Left colon (tissue), 2 donors: ENCODE measurements at regions of chr17 and their contacts with region 1.

Region 1: GRCh38 chr17:31216053-31216751 is 80.8 kb downstream of the OMG start:
- DNase-seq: no peak
- ATAC-seq: no peak

Region 2: GRCh38 chr17:31013844-31014243 is 202.4 kb before region 1 on chr17:
- intact Hi-C with region 1: loop called in 1 of 2 experiments (anchors 5 kb)
- DNase-seq: no peak
- ATAC-seq: no peak

Region 3: DNA sequence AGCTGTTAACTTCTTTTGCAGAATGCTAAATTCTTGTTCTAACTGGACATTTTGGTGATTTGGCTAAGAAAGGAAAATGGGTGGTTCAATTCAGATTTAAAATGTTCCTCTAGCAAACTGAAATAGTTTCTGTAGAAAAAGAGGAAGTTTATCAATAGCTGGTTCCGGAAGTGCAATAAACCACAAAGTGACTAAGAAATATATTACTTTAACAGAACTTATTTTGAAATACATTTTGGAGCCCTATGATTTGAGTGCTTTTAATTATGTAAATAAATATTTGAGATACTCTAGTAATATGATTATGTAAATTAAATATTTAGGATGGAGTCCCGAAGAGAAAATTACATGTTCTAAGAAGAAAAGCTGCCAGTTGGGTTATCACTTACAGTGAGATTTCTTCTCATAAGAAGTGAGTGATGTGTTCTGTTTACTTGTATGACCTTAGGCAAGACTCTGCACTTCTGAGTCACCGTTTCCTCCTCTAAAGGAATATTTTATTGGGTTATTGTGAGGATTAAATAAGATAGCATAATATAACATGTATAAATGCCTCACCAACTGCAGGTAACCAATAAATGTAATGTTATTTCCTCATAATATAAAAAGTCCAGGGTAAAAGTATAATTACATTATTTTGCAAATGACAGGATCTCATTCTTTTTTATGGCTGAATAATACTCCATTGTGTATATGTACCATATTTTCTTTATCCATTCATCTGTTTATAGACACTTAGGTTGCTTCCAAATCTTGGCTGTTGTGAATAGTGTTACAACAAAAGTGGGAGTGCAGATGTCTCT is 98.0 kb after region 1 on chr17 and contains the start of gene EVI2B:
- intact Hi-C with region 1: no loop called
- DNase-seq: no peak
- ATAC-seq: peak; percentile 93
- total RNA-seq, gene EVI2B: 3.7 to 8.7 TPM